ENCODE measurements at regions of chr1 and their contacts with region 1.

Region 1: DNA sequence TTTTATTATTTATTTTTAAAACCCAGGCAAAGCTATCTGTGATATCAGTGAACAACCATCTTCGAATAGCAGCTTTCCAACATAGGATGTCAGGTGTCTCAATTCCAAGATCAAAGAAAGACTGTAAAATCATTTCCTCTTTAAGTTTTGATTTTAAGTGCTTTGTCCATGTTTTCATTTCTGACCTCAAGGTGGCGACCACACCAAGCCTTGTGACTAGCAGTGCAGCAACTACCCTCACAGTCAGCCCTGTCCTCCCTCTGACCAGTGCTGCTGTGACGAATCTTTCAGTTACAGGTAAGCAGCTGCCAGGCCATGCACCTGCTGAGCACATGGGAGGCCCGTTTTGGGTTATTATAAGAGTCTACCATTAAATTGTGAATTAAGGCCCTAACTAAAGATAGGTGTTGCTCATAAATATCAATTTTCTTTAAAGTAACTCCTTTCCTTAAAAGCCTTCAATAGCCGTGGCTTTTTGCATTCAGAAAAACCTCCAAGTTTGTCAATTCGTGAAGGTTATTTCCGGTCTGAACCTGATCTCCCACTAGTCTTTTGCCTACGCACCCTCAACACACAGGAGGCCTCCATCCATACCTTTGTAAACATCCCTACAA is 117.0 kb downstream of the CD247 start:
- DNase-seq: peak; percentile 81
- ATAC-seq: peak; percentile 89
- H3K4me3 ChIP-seq: no peak overlapping the region
- H3K27ac ChIP-seq: no peak overlapping the region
- H3K4me1 ChIP-seq: peaks cover 28% of the 10 kb centered on the region
- H3K27me3 ChIP-seq: no peaks in the 10 kb centered on the region
- CTCF ChIP-seq: peak; percentile 92

Region 2: DNA sequence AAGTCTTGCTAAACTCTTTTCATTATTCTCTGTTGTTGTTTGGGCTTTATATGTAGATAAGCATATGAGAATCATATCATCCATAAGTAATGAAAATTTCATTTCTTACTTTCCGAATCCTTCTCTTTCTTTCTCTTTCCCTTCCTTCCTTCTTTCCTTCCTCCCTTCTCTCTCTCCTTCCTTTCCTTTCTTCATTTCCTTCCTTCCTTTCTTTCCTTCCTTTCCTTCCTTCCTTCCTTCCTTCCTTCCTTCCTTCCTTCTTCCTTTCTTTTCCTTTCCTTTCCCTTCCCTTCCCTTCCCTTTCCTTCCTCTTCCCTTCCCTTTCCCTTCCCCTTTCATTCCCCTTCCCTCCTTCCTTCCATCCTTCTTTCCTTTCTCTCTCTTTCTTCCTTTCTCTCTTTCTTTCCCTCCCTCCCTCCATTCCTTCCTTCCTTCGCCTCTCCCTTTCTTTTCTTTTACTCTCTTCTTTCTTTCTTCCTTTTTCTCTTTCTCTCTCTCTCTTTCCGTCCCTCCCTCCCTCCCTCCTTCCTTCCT is 1426.7 kb before region 1 on chr1:
- CTCF ChIA-PET with region 1: no interaction called
- POLR2A ChIA-PET with region 1: no interaction called
- intact Hi-C with region 1: no loop called
- DNase-seq: no peak
- ATAC-seq: no peak
- H3K4me3 ChIP-seq: no peak overlapping the region
- H3K27ac ChIP-seq: no peak overlapping the region
- H3K4me1 ChIP-seq: no peaks in the 10 kb centered on the region
- H3K27me3 ChIP-seq: no peaks in the 10 kb centered on the region
- CTCF ChIP-seq: no peak

Region 3: GRCh38 chr1:167268398-167268787 is 133.0 kb before region 1 on chr1:
- CTCF ChIA-PET with region 1: interaction called, 3 read pairs
- POLR2A ChIA-PET with region 1: no interaction called
- intact Hi-C with region 1: loop called (anchors 1 kb)
- DNase-seq: no peak
- ATAC-seq: no peak
- H3K4me3 ChIP-seq: no peak overlapping the region
- H3K27ac ChIP-seq: no peak overlapping the region
- H3K4me1 ChIP-seq: peaks cover 14% of the 10 kb centered on the region
- H3K27me3 ChIP-seq: no peaks in the 10 kb centered on the region
- CTCF ChIP-seq: no peak

Region 4: GRCh38 chr1:167312871-167313270 is 88.5 kb before region 1 on chr1:
- CTCF ChIA-PET with region 1: no interaction called
- POLR2A ChIA-PET with region 1: no interaction called
- intact Hi-C with region 1: no loop called
- DNase-seq: peak; percentile 40
- ATAC-seq: peak; percentile 71
- H3K4me3 ChIP-seq: no peak overlapping the region
- H3K27ac ChIP-seq: no peak overlapping the region
- H3K4me1 ChIP-seq: no peaks in the 10 kb centered on the region
- H3K27me3 ChIP-seq: no peaks in the 10 kb centered on the region
- CTCF ChIP-seq: no peak

Region 5: GRCh38 chr1:167420510-167420909 is 19.1 kb after region 1 on chr1:
- CTCF ChIA-PET with region 1: no interaction called
- POLR2A ChIA-PET with region 1: interaction called, 3 read pairs
- intact Hi-C with region 1: loop called (anchors 2 kb)
- DNase-seq: peak; percentile 25
- ATAC-seq: peak; percentile 46; the same call in 1 of the 2 replicates
- H3K4me3 ChIP-seq: no peak overlapping the region
- H3K27ac ChIP-seq: no peak overlapping the region
- H3K4me1 ChIP-seq: peaks cover 7% of the 10 kb centered on the region; the same call in 1 of the 2 replicates
- H3K27me3 ChIP-seq: no peaks in the 10 kb centered on the region
- CTCF ChIP-seq: no peak

Region 6: DNA sequence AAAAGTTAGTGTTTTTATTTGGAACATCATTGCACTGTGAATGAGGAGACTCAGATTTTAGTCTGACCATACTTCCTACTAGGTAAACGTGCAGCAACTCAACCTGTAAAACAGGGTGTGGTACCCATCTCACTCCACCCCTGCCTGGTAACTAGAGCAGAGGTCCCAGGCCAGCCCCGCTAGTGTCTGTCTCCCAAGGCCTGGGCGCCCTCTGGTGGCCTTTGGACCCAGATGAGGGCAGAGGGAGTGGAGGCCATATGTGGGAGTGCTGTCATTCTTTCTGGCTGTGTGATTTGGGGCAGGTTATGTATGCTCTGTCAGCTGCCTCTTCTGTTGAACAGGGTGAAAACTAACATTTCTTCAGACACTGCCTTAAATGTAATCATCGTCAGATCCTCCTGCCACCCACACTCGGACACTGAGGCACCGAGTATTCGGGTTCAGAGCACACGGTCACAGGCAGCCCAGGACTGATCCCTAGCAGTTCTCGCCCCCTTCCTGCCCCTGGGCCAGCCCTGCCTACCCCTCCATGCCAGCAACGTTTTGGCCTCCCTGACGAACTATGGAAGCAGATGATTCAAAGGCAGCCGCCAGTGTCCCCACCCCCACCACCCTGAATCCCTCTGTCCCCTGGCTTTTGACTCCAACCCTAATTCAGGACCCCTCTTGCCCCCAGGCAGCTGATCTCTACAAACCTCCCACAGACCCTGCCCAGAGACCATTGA is 40.9 kb after region 1 on chr1:
- CTCF ChIA-PET with region 1: interaction called, 6 read pairs
- POLR2A ChIA-PET with region 1: no interaction called
- intact Hi-C with region 1: loop called (anchors 1 kb)
- DNase-seq: peak; percentile 99
- ATAC-seq: peak; percentile 99
- H3K4me3 ChIP-seq: peak overlapping the region; percentile 25; the same call in 1 of the 2 replicates
- H3K27ac ChIP-seq: peak overlapping the region; percentile 73
- H3K4me1 ChIP-seq: peaks cover 30% of the 10 kb centered on the region
- H3K27me3 ChIP-seq: no peaks in the 10 kb centered on the region
- CTCF ChIP-seq: peak; percentile 99

Region 7: GRCh38 chr1:167553136-167554027 is 152.0 kb after region 1 on chr1 and contains the start of gene CREG1:
- CTCF ChIA-PET with region 1: interaction called, 6 read pairs
- POLR2A ChIA-PET with region 1: no interaction called
- intact Hi-C with region 1: loop called (anchors 5 kb)
- DNase-seq: peak; percentile 97
- ATAC-seq: peak; percentile 99
- H3K4me3 ChIP-seq: peak within 1 kb of the TSS; percentile 74
- H3K27ac ChIP-seq: no peak within 1 kb of the TSS
- H3K4me1 ChIP-seq: peaks cover 14% of the 10 kb centered on the region; the same call in 1 of the 2 replicates
- H3K27me3 ChIP-seq: no peaks in the 10 kb centered on the region
- CTCF ChIP-seq: no peak
- total RNA-seq, gene CREG1: 55.7 and 63.9 TPM in 2 replicates

Measured in PC-3 (cell line).